CD8-positive, alpha-beta T cell (primary cell): ENCODE measurements at regions of chr6 and their contacts with region 1.

Region 1: DNA sequence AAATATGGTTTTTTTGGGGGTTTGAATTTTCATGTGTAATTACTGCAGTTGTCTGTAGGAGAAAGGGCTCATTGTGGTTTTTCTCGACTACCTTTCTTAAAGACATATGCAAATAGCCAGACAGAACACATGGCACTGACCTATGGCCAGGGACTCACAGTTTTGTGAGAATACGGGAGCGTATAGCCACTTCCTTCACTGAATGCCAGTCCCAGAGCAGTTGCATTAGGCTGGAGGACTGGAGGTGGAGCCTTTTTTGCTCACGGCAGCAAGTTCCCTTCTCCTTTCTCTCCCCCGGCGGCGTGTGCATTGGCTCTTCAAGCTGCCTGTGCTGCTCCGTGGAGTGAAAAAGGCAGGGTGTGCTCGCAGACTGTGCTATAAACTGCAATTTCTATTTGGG is 114.9 kb downstream of the AKAP7 start:
- DNase-seq: peak in 7 of 9 experiments; percentile 2 to 57 (median 20)
- ATAC-seq: peak; percentile 75
- H3K4me3 ChIP-seq: peak overlapping the region in 1 of 2 experiments; percentile 10
- H3K4me3 Mint-ChIP-seq: peak overlapping the region; percentile 77
- H3K27ac ChIP-seq: no peak overlapping the region
- H3K27ac Mint-ChIP-seq: peak overlapping the region; percentile 50
- H3K4me1 ChIP-seq: peaks cover 27% of the 10 kb centered on the region
- H3K4me1 Mint-ChIP-seq: peaks cover 41% of the 10 kb centered on the region
- H3K27me3 ChIP-seq: no peaks in the 10 kb centered on the region
- H3K27me3 Mint-ChIP-seq: no peaks in the 10 kb centered on the region
- CTCF ChIP-seq: no peak

Region 2: DNA sequence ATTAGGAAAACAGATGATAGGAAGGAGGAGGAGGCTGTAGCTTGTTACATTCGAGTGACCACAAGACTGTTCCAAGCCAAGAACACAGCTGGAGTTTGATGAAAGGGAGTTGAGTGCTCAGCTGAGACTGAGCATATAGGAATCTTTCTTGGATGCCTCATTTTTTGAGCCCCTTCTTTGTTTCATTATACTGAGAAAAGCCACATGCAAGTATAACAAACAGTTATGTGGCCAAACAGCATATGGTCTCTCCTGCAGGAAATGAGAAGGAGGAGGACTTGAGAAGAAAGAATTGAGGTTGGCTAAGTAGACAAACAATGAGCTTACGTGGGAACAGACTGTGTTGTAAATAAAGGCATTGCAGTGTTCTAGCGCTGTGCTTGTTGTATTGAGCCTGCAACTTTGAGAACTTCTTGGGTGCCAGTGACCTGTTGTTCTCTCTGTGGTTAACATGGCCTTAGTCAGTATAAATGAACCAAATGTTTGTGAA is 36.6 kb before region 1 on chr6:
- CTCF ChIA-PET with region 1: interaction called, 3 read pairs
- POLR2A ChIA-PET with region 1: interaction called, 3 read pairs
- intact Hi-C with region 1: loop called in 1 of 2 experiments (anchors 5 kb)
- DNase-seq: no peak
- ATAC-seq: peak; percentile 26
- H3K4me3 ChIP-seq: no peak overlapping the region
- H3K4me3 Mint-ChIP-seq: peak overlapping the region; percentile 35
- H3K27ac ChIP-seq: no peak overlapping the region
- H3K27ac Mint-ChIP-seq: peak overlapping the region; percentile 35
- H3K4me1 ChIP-seq: peaks cover 27% of the 10 kb centered on the region
- H3K4me1 Mint-ChIP-seq: peaks cover 52% of the 10 kb centered on the region
- H3K27me3 ChIP-seq: no peaks in the 10 kb centered on the region
- H3K27me3 Mint-ChIP-seq: no peaks in the 10 kb centered on the region
- CTCF ChIP-seq: no peak

Region 3: DNA sequence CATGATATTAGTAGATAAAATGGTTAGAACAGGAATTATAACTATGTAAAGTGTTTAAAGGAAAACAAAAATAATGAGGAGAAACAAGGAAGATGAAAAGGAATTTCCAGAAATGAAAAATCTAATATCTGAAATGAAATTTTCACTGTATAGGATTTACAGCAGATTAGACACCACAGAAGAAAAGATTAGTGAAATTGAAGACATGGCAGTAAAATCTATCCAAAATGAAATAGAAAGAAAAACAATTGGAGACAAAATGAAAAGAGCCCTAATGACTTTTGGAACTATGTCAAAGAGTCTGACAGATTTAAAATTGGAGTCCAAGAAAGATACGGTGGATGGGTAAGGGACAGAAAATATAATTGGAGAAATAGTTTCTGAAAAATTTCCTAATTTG is 59.3 kb after region 1 on chr6:
- CTCF ChIA-PET with region 1: interaction called, 3 read pairs
- POLR2A ChIA-PET with region 1: no interaction called
- intact Hi-C with region 1: loop called in 1 of 2 experiments (anchors 2 kb)
- DNase-seq: no peak
- ATAC-seq: no peak
- H3K4me3 ChIP-seq: no peak overlapping the region
- H3K4me3 Mint-ChIP-seq: no peak overlapping the region
- H3K27ac ChIP-seq: no peak overlapping the region
- H3K27ac Mint-ChIP-seq: peak overlapping the region; percentile 29
- H3K4me1 ChIP-seq: no peaks in the 10 kb centered on the region
- H3K4me1 Mint-ChIP-seq: peaks cover 2% of the 10 kb centered on the region
- H3K27me3 ChIP-seq: no peaks in the 10 kb centered on the region
- H3K27me3 Mint-ChIP-seq: no peaks in the 10 kb centered on the region
- CTCF ChIP-seq: no peak